CD4-positive, alpha-beta memory T cell (primary cell): ENCODE measurements at regions of chr3 and their contacts with region 1.

Region 1: GRCh38 chr3:8622873-8623691 is 21.5 kb downstream of the SSUH2 start:
- DNase-seq: peak in 2 of 5 donors; percentile 14 to 22
- H3K4me3 ChIP-seq: no peak overlapping the region
- H3K4me3 Mint-ChIP-seq: peak overlapping the region in 5 of 8 donors; percentile 1 to 80 (median 35)
- H3K27ac ChIP-seq: no peak overlapping the region
- H3K27ac Mint-ChIP-seq: peak overlapping the region in 1 of 7 donors; percentile 52
- H3K4me1 ChIP-seq: no peaks in the 10 kb centered on the region
- H3K4me1 Mint-ChIP-seq: peaks cover 1 to 10% (median 5%) of the 10 kb centered on the region in 4 donors
- H3K27me3 ChIP-seq: no peaks in the 10 kb centered on the region
- H3K27me3 Mint-ChIP-seq: peaks cover 0 to 2% of the 10 kb centered on the region in 2 donors

Region 2: DNA sequence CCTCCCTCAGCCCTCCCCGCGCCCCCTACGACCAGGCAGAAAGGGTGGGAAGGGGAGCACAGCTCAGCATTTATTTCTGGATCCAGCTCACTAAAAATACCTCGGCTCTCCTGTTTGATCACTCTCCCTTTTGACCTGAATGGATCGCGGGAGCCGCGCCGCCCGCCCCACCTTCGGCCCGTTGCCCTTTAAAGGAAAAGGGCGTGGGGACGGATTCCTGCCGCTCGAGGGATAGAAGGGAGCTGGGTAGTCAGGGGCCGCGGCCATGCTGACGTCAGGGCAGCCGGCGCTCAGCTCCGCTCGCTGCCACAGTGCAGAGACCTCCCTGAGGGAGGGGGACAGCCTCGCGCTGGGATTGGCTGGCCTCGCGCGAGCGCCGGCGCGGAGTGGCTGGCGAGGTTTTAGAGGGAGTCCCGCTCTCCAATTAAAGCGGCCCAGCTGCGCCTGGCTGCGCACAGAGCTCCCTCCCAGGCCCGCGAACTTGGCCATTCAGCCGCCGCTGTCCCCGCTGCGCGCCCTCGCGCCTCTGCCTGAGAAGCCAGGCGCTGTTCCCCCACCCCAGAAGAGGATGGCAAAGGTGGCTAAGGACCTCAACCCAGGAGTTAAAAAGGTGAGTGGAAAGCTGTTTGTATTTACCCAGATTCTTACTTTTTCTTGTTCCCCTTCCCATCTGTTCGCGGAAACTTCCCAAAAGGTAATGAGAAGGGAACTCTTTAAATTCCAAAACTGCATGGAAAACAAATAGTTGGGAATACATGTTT is 121.5 kb before region 1 on chr3 and contains the start of gene LMCD1:
- CTCF ChIA-PET with region 1: no interaction called
- POLR2A ChIA-PET with region 1: no interaction called
- intact Hi-C with region 1: loop called (anchors 10 kb)
- DNase-seq: peak; percentile 64 to 84 (median 81)
- H3K4me3 ChIP-seq: peak within 1 kb of the TSS in 1 of 2 donors; percentile 36
- H3K4me3 Mint-ChIP-seq: peak within 1 kb of the TSS; percentile 84 to 93 (median 88)
- H3K27ac ChIP-seq: peak within 1 kb of the TSS; percentile 27
- H3K27ac Mint-ChIP-seq: peak within 1 kb of the TSS; percentile 31 to 95 (median 81)
- H3K4me1 ChIP-seq: peaks cover 21% of the 10 kb centered on the region
- H3K4me1 Mint-ChIP-seq: peaks cover 5 to 26% (median 11%) of the 10 kb centered on the region in 4 donors
- H3K27me3 ChIP-seq: no peaks in the 10 kb centered on the region
- H3K27me3 Mint-ChIP-seq: no peaks in the 10 kb centered on the region
- total RNA-seq, gene LMCD1: 0.53 to 1.1 TPM

Region 3: GRCh38 chr3:9439331-9439730 is 816.2 kb after region 1 on chr3:
- CTCF ChIA-PET with region 1: no interaction called
- POLR2A ChIA-PET with region 1: no interaction called
- intact Hi-C with region 1: no loop called
- DNase-seq: no peak
- H3K4me3 ChIP-seq: no peak overlapping the region
- H3K4me3 Mint-ChIP-seq: no peak overlapping the region
- H3K27ac ChIP-seq: no peak overlapping the region
- H3K27ac Mint-ChIP-seq: peak overlapping the region in 2 of 7 donors; percentile 32 to 68
- H3K4me1 ChIP-seq: no peaks in the 10 kb centered on the region
- H3K4me1 Mint-ChIP-seq: peaks cover 0 to 5% (median 2%) of the 10 kb centered on the region in 4 donors
- H3K27me3 ChIP-seq: no peaks in the 10 kb centered on the region
- H3K27me3 Mint-ChIP-seq: no peaks in the 10 kb centered on the region